GM18951 (cell line): ENCODE measurements at regions of chr11 and their contacts with region 1.

Region 1: DNA sequence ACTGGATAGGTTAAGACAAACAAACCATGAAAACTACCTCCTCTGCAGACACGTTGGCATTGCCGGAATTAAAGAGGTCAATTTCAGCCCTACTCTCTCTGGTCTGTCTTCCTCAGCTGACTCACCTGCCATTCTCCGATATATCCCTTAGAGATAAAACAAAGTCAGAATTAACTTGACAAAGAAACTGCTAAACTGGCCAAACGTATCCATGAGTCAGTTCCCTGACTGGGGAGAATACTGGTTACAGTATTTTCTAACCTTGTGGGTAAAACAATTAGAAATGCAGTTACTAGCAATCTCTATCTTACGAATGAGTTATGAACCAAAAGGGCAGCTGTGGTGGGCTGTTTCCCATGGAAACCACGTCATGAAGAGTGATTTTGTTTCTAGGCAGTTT is 96.2 kb downstream of the RDX start:
- POLR2A ChIP-seq: no peak

Region 2: DNA sequence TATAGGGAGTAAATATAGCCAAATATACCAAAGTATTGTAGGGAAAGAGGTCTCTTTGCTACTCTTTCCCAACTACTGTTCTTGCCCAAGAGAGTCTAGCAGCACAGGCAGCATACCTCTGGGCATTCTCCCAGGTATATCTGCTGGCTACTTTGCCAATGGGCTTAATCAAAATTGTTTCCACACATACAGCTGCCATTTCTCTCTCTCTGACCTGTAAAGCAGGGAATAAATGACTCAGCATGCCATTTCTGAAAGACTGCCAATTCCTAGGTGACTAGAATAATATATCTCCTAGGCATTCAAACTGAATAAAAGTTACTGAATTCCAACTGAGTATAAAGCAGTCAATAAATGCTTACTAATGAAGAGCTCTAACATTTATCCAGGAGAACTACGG is 51.6 kb after region 1 on chr11:
- in situ Hi-C with region 1: no loop called
- POLR2A ChIP-seq: no peak

Region 3: GRCh38 chr11:110366291-110366690 is 166.1 kb after region 1 on chr11:
- in situ Hi-C with region 1: loop called (anchors 5 kb)
- POLR2A ChIP-seq: no peak

Region 4: DNA sequence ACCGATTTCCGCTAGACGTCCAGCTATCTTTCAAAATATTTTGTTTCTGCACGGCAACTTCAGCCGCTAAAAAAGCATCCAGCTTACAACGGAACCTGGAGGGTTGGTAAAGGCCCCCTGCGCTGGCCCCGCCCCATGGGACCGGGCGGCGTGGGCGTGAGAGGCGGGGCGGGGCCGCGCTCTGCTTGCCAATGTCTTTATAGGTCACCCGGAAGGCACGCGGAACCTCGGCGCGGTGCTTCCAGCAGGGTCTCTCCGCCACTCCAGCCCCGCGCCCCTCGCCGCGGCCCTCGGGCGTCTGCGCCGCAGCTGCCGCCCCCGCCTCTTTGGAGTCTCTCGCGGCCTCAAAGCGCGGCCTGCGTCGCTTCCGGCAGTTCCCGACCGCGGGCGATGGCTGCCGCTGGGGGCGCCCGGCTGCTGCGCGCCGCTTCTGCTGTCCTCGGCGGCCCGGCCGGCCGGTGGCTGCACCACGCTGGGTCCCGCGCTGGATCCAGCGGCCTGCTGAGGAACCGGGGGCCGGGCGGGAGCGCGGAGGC is 229.6 kb after region 1 on chr11 and contains the start of gene FDX1:
- in situ Hi-C with region 1: loop called (anchors 10 kb)
- POLR2A ChIP-seq: peak; percentile 72

Region 5: DNA sequence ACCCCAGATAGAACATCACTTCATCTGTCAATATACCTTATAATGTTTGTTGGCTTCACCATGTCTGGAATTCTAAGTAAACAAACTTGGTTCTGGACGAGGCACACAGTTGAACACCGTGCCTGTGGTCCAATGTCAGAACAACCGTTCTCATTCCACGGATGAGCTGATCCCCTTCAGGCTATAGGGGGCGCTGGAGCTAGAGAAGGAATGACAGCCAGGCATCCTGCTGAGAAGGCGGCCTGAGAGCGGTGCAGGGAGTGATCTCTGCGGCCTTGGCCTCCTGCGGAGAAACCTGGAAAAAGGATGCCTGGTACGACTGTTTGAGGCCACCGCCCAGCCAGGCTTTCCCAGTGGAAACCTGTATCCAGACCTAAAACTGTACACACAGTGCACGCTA is 278.2 kb after region 1 on chr11:
- in situ Hi-C with region 1: no loop called
- POLR2A ChIP-seq: no peak